Ascending aorta (tissue), 2 donors: ENCODE measurements at regions of chr5 and their contacts with region 1.

Region 1: GRCh38 chr5:79514391-79515105 is 614 bp upstream of the HOMER1 start:
- DNase-seq: peak; percentile 76 to 95
- H3K4me3 ChIP-seq: peak overlapping the region; percentile 85 to 91
- H3K27ac ChIP-seq: peak overlapping the region; percentile 97 to 98
- H3K4me1 ChIP-seq: peaks cover 0 to 2% of the 10 kb centered on the region in 2 donors
- H3K27me3 ChIP-seq: no peaks in the 10 kb centered on the region
- CTCF ChIP-seq: no peak

Region 2: DNA sequence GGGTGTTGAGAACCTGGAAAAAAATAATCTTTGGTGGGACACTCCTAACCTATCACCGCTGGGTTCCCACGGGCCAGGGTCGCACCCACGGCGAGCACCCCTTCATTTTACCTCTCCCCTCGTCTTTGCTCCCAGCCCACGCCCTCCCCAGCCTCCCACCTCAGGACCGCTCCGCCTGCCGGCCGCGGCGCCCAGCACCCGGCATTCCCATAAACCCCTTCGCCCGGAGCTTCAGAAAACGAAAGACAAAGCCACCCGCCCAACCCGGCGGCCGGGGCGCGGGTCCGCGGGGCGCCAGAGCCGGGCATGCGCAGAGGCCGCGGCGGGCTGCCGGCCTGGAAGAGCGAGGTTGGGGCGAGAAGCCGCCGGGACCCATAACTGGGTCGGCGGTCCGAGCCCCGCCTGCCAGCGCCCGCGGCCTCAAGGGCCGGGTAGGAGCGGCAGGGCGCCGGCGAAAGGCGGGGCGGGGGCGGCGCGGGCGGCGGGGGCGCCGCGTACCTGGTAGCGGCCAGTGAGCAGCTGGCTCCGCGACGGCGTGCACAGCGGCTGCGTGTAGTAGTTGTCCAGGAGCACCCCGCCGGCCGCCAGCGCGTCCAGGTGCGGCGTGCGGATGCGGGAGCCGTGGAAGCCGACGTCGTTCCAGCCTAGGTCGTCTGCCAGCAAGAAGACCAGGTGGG is 530.0 kb before region 1 on chr5:
- intact Hi-C with region 1: loop called (anchors 5 kb)
- DNase-seq: peak; percentile 52 to 92
- H3K4me3 ChIP-seq: peak overlapping the region; percentile 89 to 95
- H3K27ac ChIP-seq: peak overlapping the region; percentile 96
- H3K4me1 ChIP-seq: peaks cover 0 to 12% of the 10 kb centered on the region in 2 donors
- H3K27me3 ChIP-seq: no peaks in the 10 kb centered on the region
- CTCF ChIP-seq: peak; percentile 28 to 48 (median 40)

Region 3: DNA sequence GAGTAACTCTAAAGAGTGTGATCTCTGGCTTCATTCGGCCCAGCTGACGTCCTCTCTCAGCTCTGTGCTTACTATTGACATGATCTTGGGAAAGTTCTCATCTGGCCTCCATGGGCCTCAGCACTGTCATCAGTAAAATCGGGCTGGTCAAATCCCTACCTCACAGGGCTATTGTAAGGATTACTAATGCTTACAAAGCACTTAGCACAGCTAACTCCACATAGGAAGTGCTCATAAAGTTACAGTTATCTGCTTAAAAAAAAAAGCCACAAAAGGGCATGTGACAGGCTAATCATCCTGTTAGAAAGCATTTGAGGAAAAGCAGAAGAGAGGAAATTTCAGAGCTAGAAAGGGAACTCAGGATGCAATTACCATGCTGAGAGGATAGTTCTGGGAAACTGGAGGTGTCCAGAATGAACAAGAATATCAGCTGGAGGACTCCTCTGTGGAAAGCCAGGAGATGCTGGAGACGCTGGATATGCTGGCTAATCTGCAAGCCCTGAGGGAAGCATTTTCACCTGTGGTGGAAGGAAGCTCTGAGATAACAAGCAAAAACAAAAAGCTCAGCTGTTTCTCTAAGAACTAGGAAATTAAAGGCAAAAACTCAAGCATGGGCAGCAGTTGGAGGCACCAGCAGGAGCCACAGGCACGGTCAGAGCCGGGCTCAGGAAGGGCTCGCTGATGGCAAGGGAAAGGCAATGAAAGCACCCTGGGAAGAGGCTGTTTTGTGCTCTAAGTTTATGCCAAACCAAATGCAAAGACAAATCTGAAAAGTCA is 407.3 kb before region 1 on chr5:
- intact Hi-C with region 1: no loop called
- DNase-seq: no peak
- H3K4me3 ChIP-seq: peak overlapping the region in 1 of 2 donors; percentile 27
- H3K27ac ChIP-seq: no peak overlapping the region
- H3K4me1 ChIP-seq: peaks cover 0 to 5% of the 10 kb centered on the region in 2 donors
- H3K27me3 ChIP-seq: peaks cover 6% of the 10 kb centered on the region
- CTCF ChIP-seq: no peak

Region 4: GRCh38 chr5:79133657-79134451 is 380.7 kb before region 1 on chr5:
- intact Hi-C with region 1: loop called (anchors 5 kb)
- DNase-seq: peak in 1 of 2 donors; percentile 84
- H3K4me3 ChIP-seq: peak overlapping the region; percentile 36 to 60
- H3K27ac ChIP-seq: peak overlapping the region; percentile 81 to 85
- H3K4me1 ChIP-seq: no peaks in the 10 kb centered on the region
- H3K27me3 ChIP-seq: no peaks in the 10 kb centered on the region
- CTCF ChIP-seq: peak; percentile 41 to 78 (median 72)

Region 5: GRCh38 chr5:79474367-79475151 is 40.0 kb before region 1 on chr5:
- intact Hi-C with region 1: no loop called
- DNase-seq: no peak
- H3K4me3 ChIP-seq: no peak overlapping the region
- H3K27ac ChIP-seq: no peak overlapping the region
- H3K4me1 ChIP-seq: no peaks in the 10 kb centered on the region
- H3K27me3 ChIP-seq: no peaks in the 10 kb centered on the region
- CTCF ChIP-seq: no peak

Region 6: GRCh38 chr5:79612667-79613198 is 98.2 kb after region 1 on chr5:
- intact Hi-C with region 1: loop called (anchors 1 kb)
- DNase-seq: no peak
- H3K4me3 ChIP-seq: peak overlapping the region; percentile 87 to 99
- H3K27ac ChIP-seq: peak overlapping the region; percentile 95 to 96
- H3K4me1 ChIP-seq: peaks cover 0 to 9% of the 10 kb centered on the region in 2 donors
- H3K27me3 ChIP-seq: no peaks in the 10 kb centered on the region
- CTCF ChIP-seq: no peak

Region 7: DNA sequence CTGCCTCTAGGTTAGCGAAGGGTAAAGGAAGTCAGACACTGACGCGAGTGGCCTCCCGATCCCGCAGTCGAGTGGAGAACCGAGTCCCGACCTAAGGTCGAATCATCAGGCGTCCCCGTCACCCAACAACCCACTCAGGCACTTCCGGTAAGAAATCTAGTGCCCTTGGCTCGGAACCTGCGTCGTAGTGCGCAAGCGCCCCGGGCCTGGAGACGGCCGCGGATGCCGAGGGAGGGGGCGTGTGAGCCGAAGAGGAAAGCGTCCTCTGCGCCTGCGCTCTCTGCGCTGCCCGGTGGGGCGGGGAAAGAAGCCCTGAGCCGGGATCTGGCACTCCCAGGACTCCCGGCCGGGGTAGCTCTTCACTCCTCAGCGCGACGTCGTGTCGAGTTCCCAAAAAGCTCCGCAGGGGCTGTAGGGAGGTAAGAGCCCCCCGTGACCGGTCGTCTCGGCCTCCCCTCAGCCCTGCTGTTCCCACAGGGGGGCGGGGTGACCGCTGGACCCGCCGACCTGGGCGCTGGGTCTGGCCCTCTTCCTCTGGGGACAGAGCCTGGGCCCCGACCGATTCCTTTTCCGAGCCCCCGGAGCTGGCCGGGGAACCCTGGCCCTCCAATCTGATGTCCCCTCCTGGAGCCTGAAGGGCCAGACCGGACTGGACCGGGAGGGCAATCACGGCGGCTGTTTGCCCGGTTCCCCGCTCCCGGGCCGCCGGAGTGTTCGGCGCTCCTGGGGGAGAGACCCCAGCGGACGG is 893.4 kb after region 1 on chr5 and contains the start of gene ZFYVE16:
- intact Hi-C with region 1: loop called (anchors 2 kb)
- DNase-seq: peak; percentile 91 to 99
- H3K4me3 ChIP-seq: peak within 1 kb of the TSS; percentile 71 to 78
- H3K27ac ChIP-seq: peak within 1 kb of the TSS; percentile 89 to 95
- H3K4me1 ChIP-seq: peaks cover 3 to 15% of the 10 kb centered on the region in 2 donors
- H3K27me3 ChIP-seq: no peaks in the 10 kb centered on the region
- CTCF ChIP-seq: peak; percentile 39 to 57 (median 46)
- total RNA-seq, gene ZFYVE16: 10.0 TPM

Region 8: DNA sequence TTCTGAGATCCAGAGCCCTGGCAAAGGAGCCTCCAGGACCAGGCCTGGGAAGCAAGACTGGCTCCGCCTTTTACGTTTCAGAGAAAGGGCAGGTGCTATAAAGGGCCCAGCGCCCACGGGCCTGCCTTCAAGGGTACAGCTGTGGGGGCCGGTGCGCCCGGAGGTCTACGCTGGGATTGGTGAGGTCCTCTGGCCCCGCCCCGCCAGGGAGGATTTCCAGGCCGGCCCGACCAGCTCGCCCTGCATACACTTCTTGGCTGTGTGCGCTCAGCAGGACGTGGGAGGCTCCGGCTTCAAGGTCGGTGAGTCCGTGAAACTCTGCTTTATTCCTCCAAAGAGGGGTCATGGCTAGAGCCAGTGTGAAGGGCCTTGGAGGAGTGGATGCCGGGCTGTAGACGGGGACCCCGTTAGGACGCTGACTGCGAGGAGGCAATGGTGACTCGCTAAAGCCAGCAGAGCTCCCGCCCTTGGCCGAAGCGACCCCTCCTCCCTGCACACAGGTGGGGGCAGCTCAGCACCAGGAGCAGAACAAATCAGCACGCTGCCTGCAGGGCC is 1718.6 kb after region 1 on chr5 and contains the start of gene CKMT2:
- intact Hi-C with region 1: loop called (anchors 10 kb)
- DNase-seq: peak; percentile 71 to 90
- H3K4me3 ChIP-seq: peak within 1 kb of the TSS; percentile 55 to 70
- H3K27ac ChIP-seq: peak within 1 kb of the TSS; percentile 93 to 98
- H3K4me1 ChIP-seq: peaks cover 11 to 27% of the 10 kb centered on the region in 2 donors
- H3K27me3 ChIP-seq: no peaks in the 10 kb centered on the region
- CTCF ChIP-seq: no peak
- total RNA-seq, gene CKMT2: 0.43 TPM